PC-9 (cell line): ENCODE measurements at regions of chr18 and their contacts with region 1.

Region 1: GRCh38 chr18:9719421-9719981 is 11.4 kb downstream of the RAB31 start:
- DNase-seq: peak; percentile 78 to 82
- H3K4me3 ChIP-seq: peak overlapping the region; percentile 24; the same call in 1 of the 2 replicates
- H3K27ac ChIP-seq: peak overlapping the region; percentile 76
- H3K4me1 ChIP-seq: peaks cover 39% of the 10 kb centered on the region
- H3K27me3 ChIP-seq: no peaks in the 10 kb centered on the region
- CTCF ChIP-seq: no peak

Region 2: DNA sequence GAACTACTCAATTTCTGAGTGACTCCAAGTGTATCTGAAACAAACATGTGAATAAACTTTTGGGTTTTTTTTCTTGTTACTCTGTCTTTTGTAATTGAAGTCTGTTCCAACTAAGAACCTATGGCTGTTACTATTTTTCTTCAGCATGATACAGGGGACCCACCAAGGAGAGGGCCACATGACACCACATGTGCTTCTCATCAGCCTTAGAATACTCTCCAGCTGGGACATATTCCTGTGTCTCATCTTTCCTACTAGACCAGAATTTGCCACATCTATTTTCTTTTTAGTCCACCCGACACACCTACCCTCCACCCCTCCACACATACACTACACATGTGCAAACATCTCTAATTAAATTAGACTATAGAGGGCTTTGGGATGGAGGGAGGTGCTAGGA is 808.7 kb before region 1 on chr18:
- CTCF ChIA-PET with region 1: no interaction called
- POLR2A ChIA-PET with region 1: no interaction called
- intact Hi-C with region 1: no loop called
- DNase-seq: no peak
- H3K4me3 ChIP-seq: no peak overlapping the region
- H3K27ac ChIP-seq: no peak overlapping the region
- H3K4me1 ChIP-seq: no peaks in the 10 kb centered on the region
- H3K27me3 ChIP-seq: no peaks in the 10 kb centered on the region
- CTCF ChIP-seq: no peak

Region 3: DNA sequence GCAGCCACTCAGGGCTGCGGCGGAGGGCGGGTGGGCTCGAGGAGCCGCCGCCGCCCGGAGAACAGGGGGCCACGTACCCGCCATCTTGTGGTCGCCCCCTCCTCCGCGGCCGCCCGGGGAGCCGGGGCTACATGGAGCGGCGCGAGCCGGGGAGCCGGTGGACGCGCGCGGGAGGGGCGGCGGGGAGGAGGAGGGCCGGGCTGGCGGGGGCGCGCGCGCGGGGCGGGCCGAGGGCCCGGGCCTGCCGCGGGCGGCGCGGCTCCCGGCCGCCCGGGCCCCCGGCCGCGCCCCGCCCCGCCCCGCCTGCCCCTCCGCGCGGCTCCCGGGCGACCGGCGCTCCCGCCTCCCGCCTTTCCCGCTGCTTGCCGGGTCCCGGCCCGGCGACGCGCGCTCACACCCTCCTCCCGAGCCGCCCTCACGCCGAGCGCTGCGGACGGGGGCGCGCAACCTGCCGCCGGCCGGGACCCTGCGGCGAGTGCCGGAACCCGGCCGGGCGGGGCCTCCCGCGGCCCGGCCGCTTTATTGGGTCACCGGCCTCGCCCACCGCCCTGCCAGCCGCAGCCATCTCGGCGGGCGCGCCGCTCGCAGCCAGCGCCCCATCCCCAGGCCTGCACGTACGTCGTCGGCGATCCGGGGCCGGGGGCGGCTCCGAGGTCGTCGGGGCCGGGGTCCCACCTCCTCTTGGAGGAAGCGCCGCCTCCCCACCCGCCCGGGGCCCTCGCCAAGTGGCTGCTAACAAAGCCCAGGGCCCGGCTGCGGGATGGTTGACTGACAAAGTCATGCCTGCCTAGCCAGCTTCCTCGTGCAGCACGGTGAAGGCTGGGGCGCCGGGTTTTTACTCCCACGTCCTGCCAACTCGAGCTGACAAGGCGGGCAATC is 104.9 kb before region 1 on chr18 and contains the start of gene PPP4R1:
- CTCF ChIA-PET with region 1: no interaction called
- POLR2A ChIA-PET with region 1: no interaction called
- intact Hi-C with region 1: loop called (anchors 2 kb)
- DNase-seq: peak; percentile 56 to 80
- H3K4me3 ChIP-seq: peak within 1 kb of the TSS; percentile 94
- H3K27ac ChIP-seq: peak within 1 kb of the TSS; percentile 97
- H3K4me1 ChIP-seq: peaks cover 71% of the 10 kb centered on the region
- H3K27me3 ChIP-seq: no peaks in the 10 kb centered on the region
- CTCF ChIP-seq: no peak
- total RNA-seq, gene PPP4R1: 157 and 167 TPM in 2 replicates

Region 4: DNA sequence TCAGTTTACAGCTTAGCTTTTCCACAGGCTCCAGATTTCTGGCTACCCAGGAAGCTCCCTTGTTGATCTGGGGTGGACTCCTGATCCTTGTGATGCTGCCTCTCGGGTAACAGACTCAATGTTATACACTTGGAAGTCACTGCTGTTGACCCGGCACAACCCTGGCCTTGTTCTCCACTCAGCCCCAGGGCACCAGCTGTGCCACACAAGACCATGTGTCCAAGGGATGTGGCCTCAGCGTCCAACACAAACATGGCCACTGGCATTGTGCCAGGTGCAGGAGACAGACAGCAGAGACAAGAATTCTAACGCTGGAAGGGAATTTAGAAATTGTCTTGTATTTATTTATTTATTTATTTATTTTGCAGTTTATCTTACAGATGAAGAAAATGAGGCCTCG is 66.1 kb before region 1 on chr18:
- CTCF ChIA-PET with region 1: no interaction called
- POLR2A ChIA-PET with region 1: interaction called, 10 read pairs
- intact Hi-C with region 1: no loop called
- DNase-seq: peak in 1 of 2 experiments; percentile 69
- H3K4me3 ChIP-seq: no peak overlapping the region
- H3K27ac ChIP-seq: peak overlapping the region; percentile 83
- H3K4me1 ChIP-seq: peaks cover 57% of the 10 kb centered on the region
- H3K27me3 ChIP-seq: no peaks in the 10 kb centered on the region
- CTCF ChIP-seq: no peak

Region 5: DNA sequence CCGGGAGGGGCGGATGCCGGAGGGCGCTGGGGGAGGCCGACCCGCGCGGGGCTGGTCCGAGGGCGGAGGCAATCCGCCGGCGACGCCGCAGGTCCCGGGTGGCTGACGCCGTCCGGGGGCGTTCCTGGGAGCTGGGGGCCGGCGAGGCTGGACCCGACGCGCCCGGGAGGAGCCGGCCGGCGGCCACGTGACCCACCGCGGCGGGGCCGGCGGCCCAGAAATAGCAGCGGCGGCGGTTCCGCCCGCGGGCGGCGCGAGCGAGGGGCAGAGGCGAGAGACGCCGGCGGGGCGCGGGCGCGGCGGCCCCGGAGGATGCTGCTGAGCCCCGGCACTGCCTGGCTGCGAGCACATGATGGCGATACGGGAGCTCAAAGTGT is 11.5 kb before region 1 on chr18 and contains the start of gene RAB31:
- CTCF ChIA-PET with region 1: no interaction called
- POLR2A ChIA-PET with region 1: no interaction called
- intact Hi-C with region 1: loop called (anchors 1 kb)
- DNase-seq: peak in 1 of 2 experiments; percentile 76
- H3K4me3 ChIP-seq: peak within 1 kb of the TSS; percentile 83
- H3K27ac ChIP-seq: peak within 1 kb of the TSS; percentile 2; the same call in 1 of the 2 replicates
- H3K4me1 ChIP-seq: peaks cover 43% of the 10 kb centered on the region
- H3K27me3 ChIP-seq: no peaks in the 10 kb centered on the region
- CTCF ChIP-seq: no peak
- total RNA-seq, gene RAB31: 48.6 and 51.0 TPM in 2 replicates

Region 6: DNA sequence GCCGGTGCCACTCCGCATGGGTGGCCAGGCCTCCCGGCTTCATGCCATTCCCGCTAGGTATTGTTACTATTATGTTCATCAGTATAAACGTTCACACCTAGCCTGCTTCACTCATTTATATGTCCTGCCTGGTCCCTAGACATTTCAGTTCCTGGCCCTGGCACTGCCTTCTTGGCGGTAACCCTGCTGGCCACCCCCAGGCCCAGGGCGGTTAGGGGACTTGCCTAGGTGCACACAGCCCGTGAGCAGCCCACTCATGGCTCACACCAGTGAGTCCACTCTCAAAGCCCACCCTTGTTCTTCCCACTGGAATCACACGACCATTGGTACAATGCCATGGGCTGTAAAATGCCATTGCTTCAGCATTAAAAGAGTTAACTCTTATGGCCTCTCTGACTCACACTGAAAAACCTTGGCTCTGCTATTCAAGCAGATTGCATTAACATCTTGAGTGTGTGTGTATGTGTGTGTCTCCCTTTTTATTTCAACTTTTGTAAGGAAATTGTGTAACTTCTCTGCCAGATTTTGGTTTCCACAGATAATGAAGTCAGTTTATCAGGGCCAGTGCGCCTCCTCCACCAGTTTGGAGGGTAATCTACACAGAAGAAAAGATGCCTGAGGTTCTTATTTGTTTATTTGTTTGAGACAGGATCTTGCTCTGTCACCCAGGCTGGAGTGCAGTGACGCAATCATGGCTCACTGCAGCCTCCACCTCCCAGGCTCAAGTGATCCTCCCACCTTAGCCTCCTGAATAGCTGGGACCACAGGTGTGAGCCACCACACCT is 62.8 kb after region 1 on chr18:
- CTCF ChIA-PET with region 1: no interaction called
- POLR2A ChIA-PET with region 1: no interaction called
- intact Hi-C with region 1: no loop called
- DNase-seq: peak in 1 of 2 experiments; percentile 86
- H3K4me3 ChIP-seq: no peak overlapping the region
- H3K27ac ChIP-seq: peak overlapping the region; percentile 67
- H3K4me1 ChIP-seq: peaks cover 52% of the 10 kb centered on the region
- H3K27me3 ChIP-seq: no peaks in the 10 kb centered on the region
- CTCF ChIP-seq: no peak